ENCODE measurements at regions of chr4 and their contacts with region 1.

Region 1: GRCh38 chr4:48340965-48341775 is at the start of gene SLAIN2:
- DNase-seq: peak; percentile 95 to 100 (median 98)
- ATAC-seq: peak; percentile 84
- H3K4me3 ChIP-seq: peak within 1 kb of the TSS; percentile 80 to 93
- H3K4me3 Mint-ChIP-seq: peak within 1 kb of the TSS; percentile 99
- H3K27ac ChIP-seq: peak within 1 kb of the TSS; percentile 91 to 95
- H3K27ac Mint-ChIP-seq: peak within 1 kb of the TSS; percentile 99
- H3K4me1 ChIP-seq: peaks cover 34% of the 10 kb centered on the region
- H3K4me1 Mint-ChIP-seq: peaks cover 49% of the 10 kb centered on the region
- H3K27me3 ChIP-seq: no peaks in the 10 kb centered on the region
- H3K27me3 Mint-ChIP-seq: no peaks in the 10 kb centered on the region
- CTCF ChIP-seq: peak; percentile 46
- total RNA-seq, gene SLAIN2: 62.4 to 76.5 TPM

Region 2: GRCh38 chr4:46586566-46586965 is 1754.6 kb before region 1 on chr4:
- CTCF ChIA-PET with region 1: no interaction called
- POLR2A ChIA-PET with region 1: no interaction called
- intact Hi-C with region 1: no loop called
- DNase-seq: no peak
- ATAC-seq: no peak
- H3K4me3 ChIP-seq: no peak overlapping the region
- H3K4me3 Mint-ChIP-seq: no peak overlapping the region
- H3K27ac ChIP-seq: no peak overlapping the region
- H3K27ac Mint-ChIP-seq: no peak overlapping the region
- H3K4me1 ChIP-seq: no peaks in the 10 kb centered on the region
- H3K4me1 Mint-ChIP-seq: no peaks in the 10 kb centered on the region
- H3K27me3 ChIP-seq: no peaks in the 10 kb centered on the region
- H3K27me3 Mint-ChIP-seq: no peaks in the 10 kb centered on the region
- CTCF ChIP-seq: no peak

Region 3: GRCh38 chr4:47463235-47463956 is 877.8 kb before region 1 on chr4 and contains the start of gene COMMD8:
- CTCF ChIA-PET with region 1: no interaction called
- POLR2A ChIA-PET with region 1: no interaction called
- intact Hi-C with region 1: loop called (anchors 2 kb)
- DNase-seq: peak; percentile 95 to 99 (median 97)
- ATAC-seq: peak; percentile 86
- H3K4me3 ChIP-seq: peak within 1 kb of the TSS; percentile 71 to 85
- H3K4me3 Mint-ChIP-seq: peak within 1 kb of the TSS; percentile 88
- H3K27ac ChIP-seq: peak within 1 kb of the TSS; percentile 73 to 81
- H3K27ac Mint-ChIP-seq: peak within 1 kb of the TSS; percentile 86
- H3K4me1 ChIP-seq: peaks cover 12% of the 10 kb centered on the region
- H3K4me1 Mint-ChIP-seq: peaks cover 43% of the 10 kb centered on the region
- H3K27me3 ChIP-seq: no peaks in the 10 kb centered on the region
- H3K27me3 Mint-ChIP-seq: peaks cover 2% of the 10 kb centered on the region
- CTCF ChIP-seq: no peak
- total RNA-seq, gene COMMD8: 4.6 to 6.3 TPM

Region 4: DNA sequence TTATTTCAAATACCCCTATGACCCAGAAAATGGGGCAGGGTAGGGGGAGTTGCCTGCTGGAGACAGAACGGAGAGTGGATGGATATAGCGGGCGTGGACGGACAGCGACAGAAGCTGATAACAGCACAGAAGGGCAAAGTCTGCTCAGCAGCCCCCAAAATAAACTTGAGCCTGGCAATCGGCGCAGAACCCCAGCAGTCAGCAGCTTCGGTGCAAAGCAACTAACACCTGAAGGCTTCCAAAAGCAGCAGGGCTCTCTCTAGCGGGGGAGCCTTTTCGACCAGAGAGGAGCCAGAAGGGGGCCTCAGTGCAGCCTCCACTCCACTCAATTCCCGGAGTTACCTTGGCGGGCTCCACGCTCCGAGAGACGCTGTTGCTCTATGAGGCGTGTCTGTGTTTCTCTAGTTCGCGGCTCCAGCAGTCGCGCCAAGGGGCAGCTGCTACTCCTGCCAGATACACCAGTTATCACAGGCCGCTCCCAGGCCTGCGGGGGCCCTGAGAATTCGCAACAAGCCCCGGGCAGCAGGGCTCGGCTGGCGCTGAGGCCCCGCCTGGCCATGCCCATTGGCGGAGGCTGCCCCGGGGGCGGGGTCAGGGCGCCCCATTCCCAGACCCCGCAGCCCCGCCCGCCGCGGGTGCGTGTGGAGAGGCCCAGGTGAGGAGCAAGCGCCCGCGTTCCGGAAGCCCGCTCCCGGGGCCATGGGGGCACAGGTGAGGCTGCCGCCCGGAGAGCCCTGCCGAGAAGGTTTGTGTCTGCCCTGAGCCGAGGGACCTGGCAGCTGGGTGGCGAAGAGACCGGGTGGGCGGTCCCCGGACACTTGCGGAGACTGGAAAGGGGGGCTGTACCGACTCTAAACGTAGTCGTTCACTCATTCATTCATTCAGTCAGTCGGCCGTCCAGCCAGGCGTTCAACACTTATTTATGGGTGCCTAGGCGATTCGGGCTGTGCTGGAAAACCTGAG is 324.7 kb before region 1 on chr4 and contains the starts of genes CNGA1 and NIPAL1:
- CTCF ChIA-PET with region 1: no interaction called
- POLR2A ChIA-PET with region 1: no interaction called
- intact Hi-C with region 1: loop called in 1 of 2 experiments (anchors 2 kb)
- DNase-seq: peak; percentile 23 to 81 (median 69)
- ATAC-seq: peak; percentile 95
- H3K4me3 ChIP-seq: peak within 1 kb of the TSS; percentile 63 to 68
- H3K4me3 Mint-ChIP-seq: peak within 1 kb of the TSS; percentile 87
- H3K27ac ChIP-seq: no peak within 1 kb of the TSS
- H3K27ac Mint-ChIP-seq: peak within 1 kb of the TSS; percentile 3
- H3K4me1 ChIP-seq: peaks cover 12% of the 10 kb centered on the region
- H3K4me1 Mint-ChIP-seq: peaks cover 9% of the 10 kb centered on the region
- H3K27me3 ChIP-seq: no peaks in the 10 kb centered on the region
- H3K27me3 Mint-ChIP-seq: peaks cover 9% of the 10 kb centered on the region
- CTCF ChIP-seq: no peak
- total RNA-seq, gene CNGA1: not detected
- total RNA-seq, gene NIPAL1: 0.64 to 1.3 TPM

Region 5: DNA sequence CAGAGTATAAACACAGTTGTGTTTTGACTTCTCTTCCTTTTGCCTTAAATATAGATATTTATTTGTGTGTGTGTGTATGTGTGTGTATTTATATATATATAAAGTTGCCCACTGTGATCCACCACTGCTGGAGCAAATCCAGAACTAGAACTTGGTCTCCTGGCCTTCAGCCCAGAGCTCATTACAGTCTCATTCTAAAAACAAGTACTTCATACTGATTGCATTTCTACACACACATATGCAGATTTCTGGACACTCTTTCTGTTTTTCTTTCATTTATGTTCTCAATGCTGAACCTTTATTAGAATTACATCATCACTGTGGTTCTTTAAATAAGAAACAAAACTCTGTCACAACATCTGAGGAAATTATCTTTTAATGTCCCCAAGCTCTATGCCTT is 207.5 kb before region 1 on chr4:
- CTCF ChIA-PET with region 1: no interaction called
- POLR2A ChIA-PET with region 1: interaction called, 5 read pairs
- intact Hi-C with region 1: loop called (anchors 2 to 5 kb)
- DNase-seq: no peak
- ATAC-seq: peak; percentile 10
- H3K4me3 ChIP-seq: peak overlapping the region; percentile 48 to 60
- H3K4me3 Mint-ChIP-seq: peak overlapping the region; percentile 91
- H3K27ac ChIP-seq: peak overlapping the region; percentile 56 to 69
- H3K27ac Mint-ChIP-seq: peak overlapping the region; percentile 92
- H3K4me1 ChIP-seq: peaks cover 65% of the 10 kb centered on the region
- H3K4me1 Mint-ChIP-seq: peaks cover 82% of the 10 kb centered on the region
- H3K27me3 ChIP-seq: no peaks in the 10 kb centered on the region
- H3K27me3 Mint-ChIP-seq: no peaks in the 10 kb centered on the region
- CTCF ChIP-seq: no peak

Region 6: GRCh38 chr4:48315728-48316630 is 25.2 kb before region 1 on chr4:
- CTCF ChIA-PET with region 1: interaction called, 7 read pairs
- POLR2A ChIA-PET with region 1: no interaction called
- intact Hi-C with region 1: loop called (anchors 2 kb)
- DNase-seq: peak in 4 of 9 experiments; percentile 16 to 67 (median 38)
- ATAC-seq: no peak
- H3K4me3 ChIP-seq: no peak overlapping the region
- H3K4me3 Mint-ChIP-seq: no peak overlapping the region
- H3K27ac ChIP-seq: no peak overlapping the region
- H3K27ac Mint-ChIP-seq: no peak overlapping the region
- H3K4me1 ChIP-seq: no peaks in the 10 kb centered on the region
- H3K4me1 Mint-ChIP-seq: no peaks in the 10 kb centered on the region
- H3K27me3 ChIP-seq: no peaks in the 10 kb centered on the region
- H3K27me3 Mint-ChIP-seq: no peaks in the 10 kb centered on the region
- CTCF ChIP-seq: peak; percentile 63

Region 7: GRCh38 chr4:48779998-48780742 is 439.0 kb after region 1 on chr4 and contains the start of gene FRYL:
- CTCF ChIA-PET with region 1: no interaction called
- POLR2A ChIA-PET with region 1: no interaction called
- intact Hi-C with region 1: loop called (anchors 1 to 10 kb)
- DNase-seq: peak; percentile 94 to 99 (median 96)
- ATAC-seq: peak; percentile 85
- H3K4me3 ChIP-seq: peak within 1 kb of the TSS; percentile 57 to 80
- H3K4me3 Mint-ChIP-seq: peak within 1 kb of the TSS; percentile 91
- H3K27ac ChIP-seq: peak within 1 kb of the TSS; percentile 73 to 84
- H3K27ac Mint-ChIP-seq: peak within 1 kb of the TSS; percentile 93
- H3K4me1 ChIP-seq: peaks cover 35% of the 10 kb centered on the region
- H3K4me1 Mint-ChIP-seq: peaks cover 47% of the 10 kb centered on the region
- H3K27me3 ChIP-seq: no peaks in the 10 kb centered on the region
- H3K27me3 Mint-ChIP-seq: no peaks in the 10 kb centered on the region
- CTCF ChIP-seq: no peak
- total RNA-seq, gene FRYL: 62.9 to 66.7 TPM

Measured in CD8-positive, alpha-beta T cell (primary cell).